ENCODE measurements at regions of chr2 and their contacts with region 1.

Region 1: DNA sequence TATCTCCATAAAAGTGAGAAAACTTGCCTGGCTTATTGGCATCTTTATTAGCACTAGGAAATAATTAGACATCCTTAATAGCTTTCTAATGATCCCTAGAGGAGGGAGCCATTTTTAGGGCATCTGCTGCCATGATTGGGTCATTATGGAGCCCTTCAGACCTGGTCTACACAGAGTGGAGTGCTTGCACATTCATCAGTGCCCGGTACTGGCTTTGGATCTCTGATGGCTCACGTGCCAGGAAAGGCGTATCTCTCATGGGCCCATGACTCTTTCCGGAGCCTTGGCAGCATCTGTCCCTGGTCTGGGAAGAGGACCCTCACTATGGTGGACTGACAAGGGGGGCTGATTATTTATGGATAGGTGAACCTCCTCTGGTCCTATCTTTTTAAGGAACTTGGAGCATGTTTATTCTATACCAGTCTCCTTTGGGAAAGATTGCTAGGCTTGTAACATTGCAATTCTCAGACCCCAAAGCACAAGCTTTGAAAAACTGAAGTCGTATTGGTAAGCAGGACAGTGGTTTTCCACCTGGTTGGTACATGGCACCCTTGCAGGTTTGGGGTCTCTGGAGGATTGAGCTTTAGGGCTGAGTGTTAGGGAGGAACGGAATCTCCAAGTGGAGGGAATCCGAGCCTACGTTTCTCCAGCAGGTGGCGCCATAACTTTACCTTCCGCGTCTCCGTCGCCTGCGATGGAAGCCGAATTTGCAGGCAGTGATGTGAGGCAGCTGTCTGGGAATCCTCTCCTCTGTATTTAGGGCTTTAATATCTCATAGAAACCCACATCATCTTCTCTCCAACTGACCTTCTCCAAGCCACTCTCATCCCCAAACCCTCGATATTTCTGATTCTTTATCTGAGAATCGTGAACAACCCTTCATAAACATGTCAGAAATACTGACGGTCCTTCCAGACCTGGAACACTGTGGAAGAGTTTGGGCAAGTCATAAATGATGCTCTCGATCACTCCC is 27.8 kb downstream of the SIX2 start:
- DNase-seq: peak; percentile 62
- H3K4me3 ChIP-seq: no peak overlapping the region
- CTCF ChIP-seq: peak; percentile 80

Region 2: DNA sequence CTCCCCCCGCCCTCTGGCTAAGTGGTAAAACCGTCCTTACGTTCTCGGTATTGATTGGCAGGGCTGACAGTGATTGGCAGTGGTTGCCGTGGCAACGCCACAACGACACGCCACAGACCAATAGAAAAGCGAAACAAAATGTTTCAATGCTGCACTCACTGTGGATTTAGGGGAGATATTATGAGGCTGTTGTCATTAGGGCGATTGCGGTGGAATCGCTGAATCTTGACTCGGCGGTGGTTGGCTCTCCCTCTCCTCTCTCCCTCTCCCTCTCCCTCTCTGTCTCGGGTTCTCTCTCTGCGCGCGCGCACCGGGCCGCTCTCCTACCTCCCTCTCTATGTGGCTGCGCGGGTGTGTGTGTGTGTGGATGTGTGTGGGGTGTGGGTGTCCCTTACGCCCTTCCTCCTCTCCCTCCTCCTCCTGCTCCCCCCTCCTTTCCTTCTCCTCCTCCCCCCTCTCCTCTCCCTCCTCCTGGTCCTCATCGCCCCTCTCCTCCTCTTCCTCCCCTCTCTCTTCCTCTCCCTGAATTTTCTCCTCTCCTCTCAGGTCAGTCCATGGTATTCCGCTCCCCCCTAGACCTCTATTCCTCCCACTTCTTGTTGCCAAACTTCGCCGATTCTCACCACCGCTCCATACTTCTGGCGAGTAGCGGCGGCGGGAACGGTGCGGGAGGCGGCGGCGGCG is 39.7 kb before region 1 on chr2 and contains the start of gene SIX3:
- in situ Hi-C with region 1: no loop called
- DNase-seq: no peak
- H3K4me3 ChIP-seq: no peak within 1 kb of the TSS
- CTCF ChIP-seq: no peak

Region 3: GRCh38 chr2:45055162-45055605 is 73.8 kb after region 1 on chr2:
- in situ Hi-C with region 1: no loop called
- DNase-seq: no peak
- H3K4me3 ChIP-seq: no peak overlapping the region
- CTCF ChIP-seq: no peak

Region 4: GRCh38 chr2:45494269-45494977 is 513.0 kb after region 1 on chr2:
- in situ Hi-C with region 1: loop called (anchors 5 kb)
- DNase-seq: peak; percentile 74
- H3K4me3 ChIP-seq: no peak overlapping the region
- CTCF ChIP-seq: peak; percentile 52